ENCODE measurements at regions of chr4 and their contacts with region 1.

Region 1: GRCh38 chr4:165464813-165465381 is 86.1 kb downstream of the CPE start:
- DNase-seq: no peak
- ATAC-seq: peak; percentile 77
- H3K4me3 ChIP-seq: no peak overlapping the region
- H3K27ac ChIP-seq: no peak overlapping the region
- H3K4me1 ChIP-seq: peaks cover 0 to 4% of the 10 kb centered on the region in 2 donors
- H3K27me3 ChIP-seq: no peaks in the 10 kb centered on the region

Region 2: GRCh38 chr4:165016971-165017370 is 447.9 kb before region 1 on chr4:
- intact Hi-C with region 1: no loop called
- DNase-seq: no peak
- ATAC-seq: no peak
- H3K4me3 ChIP-seq: no peak overlapping the region
- H3K27ac ChIP-seq: no peak overlapping the region
- H3K4me1 ChIP-seq: no peaks in the 10 kb centered on the region
- H3K27me3 ChIP-seq: no peaks in the 10 kb centered on the region

Region 3: DNA sequence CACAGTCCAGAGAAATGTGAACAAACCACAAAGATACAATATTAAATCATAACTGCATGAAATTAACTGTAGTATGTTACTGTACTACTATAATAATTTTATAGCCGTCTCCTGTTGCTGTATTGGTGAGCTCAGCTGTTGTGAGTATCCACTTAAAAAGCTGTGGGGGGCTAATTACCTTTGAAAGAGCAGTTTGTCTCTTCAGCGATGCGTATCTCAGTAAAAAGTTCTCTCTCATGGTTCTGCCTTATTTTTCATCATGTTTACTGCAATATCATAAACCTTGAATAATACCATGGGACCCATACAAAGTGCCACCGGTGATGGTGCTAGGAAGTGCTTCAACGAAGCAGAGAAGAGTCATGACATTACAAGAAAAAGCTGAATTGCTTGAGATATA is 145.9 kb before region 1 on chr4:
- intact Hi-C with region 1: no loop called
- DNase-seq: no peak
- ATAC-seq: no peak
- H3K4me3 ChIP-seq: no peak overlapping the region
- H3K27ac ChIP-seq: no peak overlapping the region
- H3K4me1 ChIP-seq: no peaks in the 10 kb centered on the region
- H3K27me3 ChIP-seq: no peaks in the 10 kb centered on the region

Region 4: GRCh38 chr4:165355900-165356300 is 109.0 kb before region 1 on chr4:
- intact Hi-C with region 1: loop called (anchors 2 kb)
- DNase-seq: no peak
- ATAC-seq: peak; percentile 57
- H3K4me3 ChIP-seq: no peak overlapping the region
- H3K27ac ChIP-seq: no peak overlapping the region
- H3K4me1 ChIP-seq: no peaks in the 10 kb centered on the region
- H3K27me3 ChIP-seq: no peaks in the 10 kb centered on the region

Region 5: GRCh38 chr4:165378745-165379677 is 85.9 kb before region 1 on chr4 and contains the start of gene CPE:
- intact Hi-C with region 1: loop called in 1 of 2 experiments (anchors 5 kb)
- DNase-seq: peak; percentile 86 to 93
- ATAC-seq: peak; percentile 95
- H3K4me3 ChIP-seq: peak within 1 kb of the TSS; percentile 70 to 88
- H3K27ac ChIP-seq: peak within 1 kb of the TSS; percentile 41 to 79
- H3K4me1 ChIP-seq: peaks cover 2 to 3% of the 10 kb centered on the region in 2 donors
- H3K27me3 ChIP-seq: no peaks in the 10 kb centered on the region
- total RNA-seq, gene CPE: 417 to 443 TPM

Region 6: DNA sequence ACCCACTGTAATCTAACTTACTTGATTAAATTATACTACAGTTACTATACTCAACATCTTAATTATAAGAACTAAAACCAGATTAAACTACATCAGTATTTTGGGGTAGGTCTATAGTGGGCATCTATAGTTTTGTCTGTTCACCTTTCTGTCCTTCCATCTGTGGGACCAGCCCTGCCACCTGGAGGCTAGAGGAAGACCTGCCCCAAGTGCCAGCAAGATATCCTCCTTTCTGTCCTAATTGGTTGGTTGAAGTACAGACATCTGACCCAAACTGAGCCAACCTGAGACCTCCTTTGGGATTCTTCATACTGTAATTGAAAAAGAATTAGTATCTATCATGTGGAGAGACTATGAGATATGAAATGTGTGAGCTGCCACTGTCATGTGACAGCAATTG is 236.0 kb after region 1 on chr4:
- intact Hi-C with region 1: no loop called
- DNase-seq: no peak
- ATAC-seq: no peak
- H3K4me3 ChIP-seq: no peak overlapping the region
- H3K27ac ChIP-seq: no peak overlapping the region
- H3K4me1 ChIP-seq: no peaks in the 10 kb centered on the region
- H3K27me3 ChIP-seq: no peaks in the 10 kb centered on the region

Region 7: DNA sequence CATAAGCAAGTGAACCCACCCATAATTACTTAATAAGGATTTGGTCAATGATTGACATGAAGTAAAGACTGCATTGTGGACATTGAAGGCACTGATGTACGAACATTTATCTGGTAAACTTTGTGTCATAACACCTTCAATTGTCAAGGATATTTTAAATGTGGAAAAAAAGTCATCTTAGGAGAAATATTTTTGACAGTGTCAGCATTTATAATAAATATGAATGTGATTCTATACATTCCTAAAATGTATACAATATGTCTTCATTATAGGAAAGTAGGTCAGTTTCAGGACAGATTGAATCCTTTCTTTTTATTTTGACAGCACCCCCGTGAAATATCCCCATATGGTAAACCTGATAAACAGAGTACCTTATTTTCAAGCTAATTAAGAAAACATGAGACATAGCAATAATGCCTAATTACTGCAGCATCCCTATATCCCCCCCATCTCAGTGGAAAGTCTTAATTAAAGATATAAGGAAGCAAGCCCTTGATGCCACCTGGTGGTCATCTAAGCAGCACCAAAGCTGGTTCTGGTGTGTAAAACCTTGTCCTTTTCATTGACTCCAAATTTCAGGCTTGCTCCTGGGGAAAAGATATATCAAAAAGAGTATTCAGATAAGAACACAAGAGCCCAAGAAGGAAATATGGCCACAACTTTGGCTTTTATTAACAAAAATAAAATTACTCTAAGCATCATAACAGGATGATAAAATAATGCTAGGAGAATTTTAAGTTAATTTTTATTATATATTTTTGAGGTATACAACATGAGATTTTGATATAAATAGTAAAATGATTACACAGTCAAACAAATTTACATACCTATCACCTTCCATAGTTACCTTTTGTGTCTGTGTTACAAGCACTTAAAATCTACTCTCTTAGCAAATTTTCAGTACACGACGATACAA is 787.8 kb after region 1 on chr4:
- intact Hi-C with region 1: no loop called
- DNase-seq: no peak
- ATAC-seq: no peak
- H3K4me3 ChIP-seq: no peak overlapping the region
- H3K27ac ChIP-seq: no peak overlapping the region
- H3K4me1 ChIP-seq: no peaks in the 10 kb centered on the region
- H3K27me3 ChIP-seq: no peaks in the 10 kb centered on the region

Measured in aorta (tissue), 5 donors.